ENCODE measurements at regions of chr18 and their contacts with region 1.

Region 1: GRCh38 chr18:8696749-8697211 is 8.6 kb upstream of the MTCL1 start:
- DNase-seq: peak; percentile 51 to 82 (median 70)
- ATAC-seq: peak; percentile 96
- H3K4me3 ChIP-seq: no peak overlapping the region
- H3K4me3 Mint-ChIP-seq: no peak overlapping the region
- H3K27ac ChIP-seq: no peak overlapping the region
- H3K27ac Mint-ChIP-seq: no peak overlapping the region
- H3K4me1 ChIP-seq: no peaks in the 10 kb centered on the region
- H3K4me1 Mint-ChIP-seq: no peaks in the 10 kb centered on the region
- H3K27me3 ChIP-seq: peaks cover 14 to 16% of the 10 kb centered on the region in 2 experiments
- H3K27me3 Mint-ChIP-seq: peaks cover 26% of the 10 kb centered on the region
- CTCF ChIP-seq: peak; percentile 95

Region 2: DNA sequence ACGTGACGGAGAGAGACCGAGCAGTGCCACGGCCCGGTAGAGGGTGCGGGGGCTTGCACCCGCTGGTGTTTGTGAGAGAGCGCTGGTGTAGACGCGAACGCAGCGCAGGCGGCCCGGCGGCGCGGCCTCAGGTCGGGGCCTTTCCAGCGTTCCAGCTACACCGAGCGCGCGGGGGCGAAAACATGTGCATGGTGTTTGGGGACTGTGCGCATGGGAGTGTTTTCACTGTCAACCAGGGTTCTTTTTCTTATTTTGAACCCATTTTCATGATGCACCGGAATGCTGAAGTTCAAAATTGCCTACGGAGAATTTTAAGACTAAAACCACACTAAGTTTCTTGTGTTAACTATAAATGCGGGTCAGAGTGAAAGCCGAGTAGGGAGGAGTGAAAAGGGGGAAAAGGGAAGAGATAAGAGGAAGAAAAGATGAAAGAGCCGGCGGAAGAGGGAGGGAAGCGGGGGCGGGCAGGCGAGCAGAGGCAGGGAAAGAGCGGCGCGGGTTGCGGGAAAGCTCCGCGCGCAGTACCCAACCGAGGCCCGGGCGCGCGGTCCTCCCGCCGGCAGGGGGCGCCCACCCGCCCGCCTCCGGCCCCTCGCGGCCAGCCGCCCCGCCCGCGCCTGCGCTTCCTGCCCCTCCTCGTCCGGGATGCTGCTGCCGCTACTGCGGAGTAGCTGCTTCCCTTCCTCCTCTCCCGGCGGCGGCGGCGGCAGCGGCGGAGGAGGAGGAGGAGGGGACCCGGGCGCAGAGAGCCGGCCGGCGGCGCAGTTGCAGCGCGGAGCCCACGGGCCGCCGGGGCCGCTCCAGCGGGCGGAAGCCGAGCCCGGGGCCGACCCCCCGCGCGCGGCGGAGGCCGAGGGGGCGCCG is 87.8 kb before region 1 on chr18 and contains the start of gene RAB12:
- CTCF ChIA-PET with region 1: no interaction called
- POLR2A ChIA-PET with region 1: no interaction called
- intact Hi-C with region 1: loop called in 1 of 2 experiments (anchors 2 kb)
- DNase-seq: peak; percentile 74 to 95 (median 86)
- ATAC-seq: peak; percentile 84
- H3K4me3 ChIP-seq: peak within 1 kb of the TSS; percentile 92
- H3K4me3 Mint-ChIP-seq: peak within 1 kb of the TSS; percentile 92
- H3K27ac ChIP-seq: peak within 1 kb of the TSS in 1 of 2 donors; percentile 71
- H3K27ac Mint-ChIP-seq: peak within 1 kb of the TSS; percentile 87
- H3K4me1 ChIP-seq: peaks cover 40% of the 10 kb centered on the region
- H3K4me1 Mint-ChIP-seq: peaks cover 58% of the 10 kb centered on the region
- H3K27me3 ChIP-seq: no peaks in the 10 kb centered on the region
- H3K27me3 Mint-ChIP-seq: peaks cover 8% of the 10 kb centered on the region
- CTCF ChIP-seq: peak; percentile 61
- total RNA-seq, gene RAB12: 20.1 to 20.3 TPM

Region 3: DNA sequence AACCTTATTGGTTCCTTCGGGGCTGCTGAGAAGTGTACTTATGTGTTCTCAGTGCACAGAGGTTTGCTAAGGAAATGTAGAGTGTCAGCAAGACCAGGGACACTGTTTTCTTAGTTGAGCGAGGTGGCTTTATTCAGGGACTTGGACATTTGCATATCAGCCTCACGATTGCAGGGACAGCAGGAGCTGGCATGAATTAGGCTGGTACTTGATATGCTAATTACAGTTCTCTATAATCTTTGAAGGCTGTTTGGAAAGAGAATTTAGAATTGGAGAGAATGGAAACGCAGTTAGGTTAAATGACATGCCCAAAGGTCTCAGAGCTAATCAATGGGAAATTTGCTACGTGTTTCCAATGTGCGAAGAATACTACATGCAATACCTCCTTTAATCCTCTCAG is 10.2 kb before region 1 on chr18:
- CTCF ChIA-PET with region 1: interaction called, 13 read pairs
- POLR2A ChIA-PET with region 1: interaction called, 3 read pairs
- intact Hi-C with region 1: no loop called
- DNase-seq: no peak
- ATAC-seq: no peak
- H3K4me3 ChIP-seq: no peak overlapping the region
- H3K4me3 Mint-ChIP-seq: no peak overlapping the region
- H3K27ac ChIP-seq: no peak overlapping the region
- H3K27ac Mint-ChIP-seq: no peak overlapping the region
- H3K4me1 ChIP-seq: no peaks in the 10 kb centered on the region
- H3K4me1 Mint-ChIP-seq: no peaks in the 10 kb centered on the region
- H3K27me3 ChIP-seq: no peaks in the 10 kb centered on the region
- H3K27me3 Mint-ChIP-seq: peaks cover 6% of the 10 kb centered on the region
- CTCF ChIP-seq: no peak

Region 4: GRCh38 chr18:8754995-8755955 is 58.5 kb after region 1 on chr18:
- CTCF ChIA-PET with region 1: no interaction called
- POLR2A ChIA-PET with region 1: no interaction called
- intact Hi-C with region 1: no loop called
- DNase-seq: peak; percentile 31 to 91 (median 44)
- ATAC-seq: peak; percentile 99
- H3K4me3 ChIP-seq: peak overlapping the region; percentile 10
- H3K4me3 Mint-ChIP-seq: peak overlapping the region; percentile 75
- H3K27ac ChIP-seq: no peak overlapping the region
- H3K27ac Mint-ChIP-seq: peak overlapping the region; percentile 43
- H3K4me1 ChIP-seq: peaks cover 31% of the 10 kb centered on the region
- H3K4me1 Mint-ChIP-seq: peaks cover 32% of the 10 kb centered on the region
- H3K27me3 ChIP-seq: no peaks in the 10 kb centered on the region
- H3K27me3 Mint-ChIP-seq: no peaks in the 10 kb centered on the region
- CTCF ChIP-seq: no peak

Region 5: GRCh38 chr18:8982416-8983184 is 285.8 kb after region 1 on chr18:
- CTCF ChIA-PET with region 1: interaction called, 25 read pairs
- POLR2A ChIA-PET with region 1: interaction called, 3 read pairs
- intact Hi-C with region 1: no loop called
- DNase-seq: peak in 3 of 14 experiments; percentile 6 to 35 (median 25)
- ATAC-seq: no peak
- H3K4me3 ChIP-seq: no peak overlapping the region
- H3K4me3 Mint-ChIP-seq: no peak overlapping the region
- H3K27ac ChIP-seq: no peak overlapping the region
- H3K27ac Mint-ChIP-seq: no peak overlapping the region
- H3K4me1 ChIP-seq: no peaks in the 10 kb centered on the region
- H3K4me1 Mint-ChIP-seq: no peaks in the 10 kb centered on the region
- H3K27me3 ChIP-seq: no peaks in the 10 kb centered on the region
- H3K27me3 Mint-ChIP-seq: no peaks in the 10 kb centered on the region
- CTCF ChIP-seq: no peak

Region 6: GRCh38 chr18:8988261-8988871 is 291.6 kb after region 1 on chr18:
- CTCF ChIA-PET with region 1: interaction called, 25 read pairs
- POLR2A ChIA-PET with region 1: interaction called, 3 read pairs
- intact Hi-C with region 1: loop called (anchors 1 kb)
- DNase-seq: peak; percentile 35 to 78 (median 46)
- ATAC-seq: peak; percentile 70
- H3K4me3 ChIP-seq: no peak overlapping the region
- H3K4me3 Mint-ChIP-seq: no peak overlapping the region
- H3K27ac ChIP-seq: no peak overlapping the region
- H3K27ac Mint-ChIP-seq: no peak overlapping the region
- H3K4me1 ChIP-seq: no peaks in the 10 kb centered on the region
- H3K4me1 Mint-ChIP-seq: no peaks in the 10 kb centered on the region
- H3K27me3 ChIP-seq: no peaks in the 10 kb centered on the region
- H3K27me3 Mint-ChIP-seq: peaks cover 27% of the 10 kb centered on the region
- CTCF ChIP-seq: peak; percentile 84

Region 7: DNA sequence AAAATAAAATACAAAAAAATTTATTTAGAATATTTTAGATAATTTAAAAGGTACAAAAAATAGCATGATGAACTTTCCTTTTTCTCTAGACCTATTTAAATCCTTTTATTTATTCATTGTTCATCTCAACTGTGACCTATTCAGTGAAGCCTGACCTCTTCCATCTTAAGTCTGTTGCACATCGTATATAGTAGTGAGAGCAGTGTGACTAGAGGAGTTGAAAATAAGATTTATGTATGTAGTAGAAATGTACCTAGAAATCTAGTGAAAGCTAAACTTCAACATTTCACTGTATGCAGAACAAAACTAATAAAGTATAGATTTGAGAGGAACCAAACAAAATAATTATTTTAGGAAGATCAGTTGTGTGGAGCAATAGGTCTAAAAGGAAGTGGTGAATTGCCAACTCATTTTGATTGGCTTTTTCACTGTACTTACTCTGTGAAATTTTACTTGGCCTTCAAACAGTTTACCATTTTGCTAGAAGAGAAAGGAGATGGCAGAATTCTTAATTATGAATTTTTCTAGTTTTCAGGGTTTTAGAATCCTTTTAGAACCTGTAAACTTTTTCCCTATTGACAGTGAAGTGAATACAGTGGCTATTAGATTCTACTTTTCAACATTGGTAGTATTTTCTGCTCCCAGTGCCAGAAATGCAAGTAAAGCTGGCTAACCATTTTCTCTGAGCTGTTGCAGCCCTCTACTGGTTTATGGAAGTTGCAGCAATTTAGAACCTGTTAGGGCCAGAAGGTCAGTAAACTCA is 450.8 kb after region 1 on chr18:
- CTCF ChIA-PET with region 1: interaction called, 5 read pairs
- POLR2A ChIA-PET with region 1: no interaction called
- intact Hi-C with region 1: loop called in 1 of 2 experiments (anchors 5 kb)
- DNase-seq: peak in 7 of 14 experiments; percentile 18 to 81 (median 44)
- ATAC-seq: peak; percentile 74
- H3K4me3 ChIP-seq: no peak overlapping the region
- H3K4me3 Mint-ChIP-seq: no peak overlapping the region
- H3K27ac ChIP-seq: no peak overlapping the region
- H3K27ac Mint-ChIP-seq: peak overlapping the region; percentile 10
- H3K4me1 ChIP-seq: peaks cover 28% of the 10 kb centered on the region
- H3K4me1 Mint-ChIP-seq: peaks cover 85% of the 10 kb centered on the region
- H3K27me3 ChIP-seq: no peaks in the 10 kb centered on the region
- H3K27me3 Mint-ChIP-seq: no peaks in the 10 kb centered on the region
- CTCF ChIP-seq: peak; percentile 76

Region 8: DNA sequence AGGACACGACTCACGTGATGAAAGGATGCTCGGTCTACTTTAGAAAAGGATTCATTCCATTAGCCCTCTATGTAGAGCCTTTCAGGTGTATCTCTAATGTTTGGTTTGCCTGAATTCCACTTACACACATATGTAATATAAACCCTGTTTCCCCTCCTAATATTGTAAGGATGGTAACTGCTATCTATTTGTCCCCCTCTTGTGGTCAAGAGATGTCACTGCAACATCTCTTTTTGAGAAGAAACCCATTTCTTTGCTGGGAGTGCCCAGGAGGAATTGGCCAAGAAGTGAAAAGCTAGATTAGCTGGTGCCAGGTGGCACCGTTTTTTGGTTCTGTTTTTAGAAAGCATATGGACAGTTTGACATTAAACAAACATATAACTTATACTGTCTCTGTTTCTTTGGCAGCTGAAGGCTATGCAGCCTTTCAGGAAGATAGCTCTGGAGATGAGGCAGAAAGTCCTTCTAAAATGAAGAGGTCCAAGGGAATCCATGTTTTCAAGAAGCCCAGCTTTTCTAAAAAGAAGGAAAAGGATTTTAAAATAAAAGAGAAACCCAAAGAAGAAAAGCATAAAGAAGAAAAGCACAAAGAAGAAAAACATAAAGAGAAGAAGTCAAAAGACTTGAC is 819.8 kb after region 1 on chr18:
- CTCF ChIA-PET with region 1: no interaction called
- POLR2A ChIA-PET with region 1: no interaction called
- intact Hi-C with region 1: loop called in 1 of 2 experiments (anchors 2 kb)
- DNase-seq: peak in 4 of 14 experiments; percentile 18 to 62 (median 56)
- ATAC-seq: peak; percentile 65
- H3K4me3 ChIP-seq: no peak overlapping the region
- H3K4me3 Mint-ChIP-seq: no peak overlapping the region
- H3K27ac ChIP-seq: no peak overlapping the region
- H3K27ac Mint-ChIP-seq: no peak overlapping the region
- H3K4me1 ChIP-seq: no peaks in the 10 kb centered on the region
- H3K4me1 Mint-ChIP-seq: peaks cover 12% of the 10 kb centered on the region
- H3K27me3 ChIP-seq: no peaks in the 10 kb centered on the region
- H3K27me3 Mint-ChIP-seq: no peaks in the 10 kb centered on the region
- CTCF ChIP-seq: peak; percentile 96

Measured in CD4-positive, alpha-beta T cell (primary cell).